CD8-positive, alpha-beta T cell (primary cell): ENCODE measurements at regions of chr5 and their contacts with region 1.

Region 1: DNA sequence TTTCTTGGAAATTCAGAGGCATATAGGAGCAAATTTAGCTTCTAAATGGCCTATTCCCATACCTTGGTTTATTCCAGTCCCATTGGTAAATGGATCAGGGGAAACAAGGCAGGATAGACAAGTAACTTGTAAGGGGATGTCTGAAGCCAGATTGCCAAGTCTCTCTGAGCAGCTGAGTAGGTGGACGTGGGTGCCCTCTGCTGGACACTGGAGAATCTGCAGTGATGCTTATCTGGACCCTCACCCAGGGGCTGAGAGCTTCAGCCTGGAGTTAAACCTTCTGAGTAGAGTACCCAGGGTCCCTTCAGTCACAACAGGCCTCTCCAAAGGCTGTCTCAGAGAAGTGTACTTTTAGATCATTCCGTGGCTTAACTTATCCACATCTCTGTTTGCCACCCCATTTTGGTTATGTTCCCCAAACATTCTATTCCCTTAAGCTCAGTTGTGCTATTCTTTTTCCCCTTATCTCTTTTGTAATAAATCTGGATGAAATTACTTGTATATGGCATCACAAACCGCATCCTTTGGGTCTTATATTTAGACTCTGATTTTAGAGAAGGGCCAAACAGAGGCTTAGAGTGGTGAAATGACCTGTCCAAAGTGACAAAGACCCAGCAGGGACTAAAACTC is 218.3 kb upstream of the GLRA1 start:
- DNase-seq: peak; percentile 41 to 77 (median 60)
- ATAC-seq: peak; percentile 69
- H3K4me3 ChIP-seq: no peak overlapping the region
- H3K4me3 Mint-ChIP-seq: no peak overlapping the region
- H3K27ac ChIP-seq: no peak overlapping the region
- H3K27ac Mint-ChIP-seq: no peak overlapping the region
- H3K4me1 ChIP-seq: no peaks in the 10 kb centered on the region
- H3K4me1 Mint-ChIP-seq: no peaks in the 10 kb centered on the region
- H3K27me3 ChIP-seq: no peaks in the 10 kb centered on the region
- H3K27me3 Mint-ChIP-seq: no peaks in the 10 kb centered on the region
- CTCF ChIP-seq: peak; percentile 93

Region 2: DNA sequence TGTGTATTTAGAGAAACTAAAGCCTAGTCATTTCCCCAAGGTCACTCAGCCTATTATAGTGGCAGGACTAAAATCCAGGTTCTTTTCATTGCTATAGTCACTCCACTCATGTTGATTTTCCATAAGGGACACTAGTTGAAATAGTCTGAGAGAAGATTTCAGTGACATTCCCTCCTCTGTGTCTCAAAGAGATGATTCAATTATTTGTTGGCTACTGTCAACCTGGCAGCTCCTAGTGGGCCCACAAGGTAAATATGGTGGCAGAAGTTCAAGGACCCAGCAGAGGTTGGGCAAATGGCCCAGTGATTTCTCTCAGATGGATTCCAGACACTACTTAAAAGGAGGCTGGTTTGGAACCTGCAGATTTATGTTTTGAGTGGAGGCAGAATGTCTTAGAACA is 323.1 kb before region 1 on chr5:
- CTCF ChIA-PET with region 1: interaction called, 227 read pairs
- POLR2A ChIA-PET with region 1: interaction called, 14 read pairs
- intact Hi-C with region 1: loop called (anchors 1 kb)
- DNase-seq: no peak
- ATAC-seq: no peak
- H3K4me3 ChIP-seq: no peak overlapping the region
- H3K4me3 Mint-ChIP-seq: no peak overlapping the region
- H3K27ac ChIP-seq: no peak overlapping the region
- H3K27ac Mint-ChIP-seq: peak overlapping the region; percentile 22
- H3K4me1 ChIP-seq: no peaks in the 10 kb centered on the region
- H3K4me1 Mint-ChIP-seq: no peaks in the 10 kb centered on the region
- H3K27me3 ChIP-seq: no peaks in the 10 kb centered on the region
- H3K27me3 Mint-ChIP-seq: no peaks in the 10 kb centered on the region
- CTCF ChIP-seq: no peak

Region 3: GRCh38 chr5:152164860-152165259 is 21.9 kb after region 1 on chr5:
- CTCF ChIA-PET with region 1: interaction called, 17 read pairs
- POLR2A ChIA-PET with region 1: no interaction called
- intact Hi-C with region 1: no loop called
- DNase-seq: no peak
- ATAC-seq: no peak
- H3K4me3 ChIP-seq: no peak overlapping the region
- H3K4me3 Mint-ChIP-seq: no peak overlapping the region
- H3K27ac ChIP-seq: no peak overlapping the region
- H3K27ac Mint-ChIP-seq: no peak overlapping the region
- H3K4me1 ChIP-seq: peaks cover 7% of the 10 kb centered on the region
- H3K4me1 Mint-ChIP-seq: peaks cover 2% of the 10 kb centered on the region
- H3K27me3 ChIP-seq: no peaks in the 10 kb centered on the region
- H3K27me3 Mint-ChIP-seq: no peaks in the 10 kb centered on the region
- CTCF ChIP-seq: no peak